ENCODE measurements at regions of chr14 and their contacts with region 1.

Region 1: GRCh38 chr14:103385152-103385993 is at the start of gene MARK3:
- DNase-seq: peak; percentile 97
- H3K4me3 ChIP-seq: peak within 1 kb of the TSS; percentile 94 to 96
- H3K27ac ChIP-seq: peak within 1 kb of the TSS; percentile 98 to 99
- H3K4me1 ChIP-seq: peaks cover 8% of the 10 kb centered on the region
- H3K27me3 ChIP-seq: no peaks in the 10 kb centered on the region
- CTCF ChIP-seq: peak in 2 of 4 experiments; percentile 37 to 38
- POLR2A ChIP-seq: peak; percentile 93
- total RNA-seq, gene MARK3: 51.5 to 115 TPM

Region 2: DNA sequence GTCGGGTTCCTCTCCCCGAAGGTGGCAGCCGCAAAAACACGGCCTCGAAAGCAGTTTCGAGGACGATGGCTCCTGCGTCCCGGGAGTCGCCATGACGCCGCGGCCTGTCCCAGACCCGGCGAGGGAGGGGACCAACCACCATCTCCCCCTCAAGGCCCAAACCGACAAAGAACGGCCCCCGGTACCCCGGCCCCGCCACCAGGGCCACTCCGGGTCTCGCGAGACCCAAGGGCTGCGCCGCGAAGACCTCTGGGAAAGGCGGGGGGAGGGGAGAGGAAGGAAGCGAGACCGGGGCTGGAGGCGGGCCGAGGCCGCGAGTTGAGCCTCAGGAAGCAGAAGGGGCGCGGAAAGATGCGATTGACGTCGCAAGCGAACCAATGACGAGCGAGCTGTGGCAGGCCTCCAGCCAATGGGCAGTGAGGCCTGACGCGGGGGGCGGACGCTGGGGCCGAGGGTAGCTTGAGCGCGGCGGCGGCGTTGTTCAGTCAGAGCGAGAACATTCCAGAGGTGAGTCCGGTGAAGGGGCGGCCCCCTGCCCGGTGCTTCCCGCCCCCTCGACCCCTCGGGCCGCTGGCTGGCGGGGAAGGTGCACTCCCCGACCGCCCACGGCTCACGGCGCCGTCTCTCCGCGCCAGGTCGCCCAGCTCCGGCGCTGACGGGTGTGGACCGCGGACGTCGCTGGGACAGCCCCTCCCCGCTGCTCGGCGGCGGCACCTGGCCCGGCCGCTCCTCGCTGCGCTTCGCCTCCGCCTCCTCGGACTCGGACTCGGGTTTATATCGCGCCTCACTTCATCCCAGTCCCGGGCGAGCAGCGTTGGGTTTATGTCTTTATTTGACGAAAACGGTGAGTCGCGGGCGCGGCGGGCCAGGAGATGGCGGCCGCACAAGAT is 51.4 kb before region 1 on chr14 and contains the start of gene EIF5:
- intact Hi-C with region 1: loop called (anchors 2 kb)
- DNase-seq: peak; percentile 99
- H3K4me3 ChIP-seq: peak within 1 kb of the TSS; percentile 98 to 100
- H3K27ac ChIP-seq: peak within 1 kb of the TSS; percentile 99 to 100
- H3K4me1 ChIP-seq: peaks cover 4% of the 10 kb centered on the region
- H3K27me3 ChIP-seq: no peaks in the 10 kb centered on the region
- CTCF ChIP-seq: peak; percentile 24 to 87 (median 48)
- POLR2A ChIP-seq: peak; percentile 96
- total RNA-seq, gene EIF5: 205 to 268 TPM

Region 3: GRCh38 chr14:103500148-103500990 is 115.0 kb after region 1 on chr14:
- intact Hi-C with region 1: loop called (anchors 5 kb)
- DNase-seq: peak; percentile 96
- H3K4me3 ChIP-seq: no peak overlapping the region
- H3K27ac ChIP-seq: peak overlapping the region; percentile 11 to 61
- H3K4me1 ChIP-seq: no peaks in the 10 kb centered on the region
- H3K27me3 ChIP-seq: no peaks in the 10 kb centered on the region
- CTCF ChIP-seq: peak; percentile 88 to 96 (median 92)
- POLR2A ChIP-seq: no peak

Region 4: DNA sequence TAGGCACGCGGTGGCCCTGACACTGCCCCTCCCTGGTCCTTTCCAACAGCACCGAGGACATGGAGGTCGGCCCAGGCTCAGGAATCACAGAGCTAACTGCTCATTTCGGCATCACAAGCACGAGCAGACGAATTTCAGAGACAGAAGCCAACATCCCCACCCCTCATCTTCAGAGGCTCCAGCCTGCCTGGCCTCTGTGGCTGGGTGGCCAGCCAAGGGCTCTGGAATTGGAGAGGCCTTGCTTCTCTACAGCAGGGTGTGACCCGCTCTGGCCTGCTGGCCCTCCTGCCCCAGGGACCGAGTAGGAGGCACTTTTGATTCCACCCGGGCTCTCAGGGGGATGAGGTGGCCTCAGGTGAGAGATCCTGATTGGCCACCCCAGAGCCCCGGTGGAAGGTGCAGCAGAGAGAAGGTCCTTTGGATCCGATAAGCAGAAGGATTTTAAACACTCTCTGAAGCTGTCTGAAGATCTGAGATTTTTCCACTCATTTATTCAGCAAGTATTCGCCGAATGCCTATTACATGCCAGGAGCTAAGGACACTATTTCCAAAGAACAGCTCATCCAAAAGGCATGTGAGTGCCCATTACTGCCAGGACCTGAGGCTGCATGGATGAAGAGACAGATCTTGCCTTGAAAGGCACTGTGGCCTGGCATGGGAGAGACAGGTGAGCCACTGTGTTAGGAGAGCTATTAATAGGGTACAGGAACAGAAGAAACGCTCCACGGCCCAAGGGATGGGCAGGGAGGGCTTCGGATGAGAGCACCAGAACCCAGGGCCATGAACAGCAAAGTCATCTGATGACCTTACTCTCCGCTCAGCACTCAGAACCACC is 166.9 kb after region 1 on chr14:
- intact Hi-C with region 1: loop called (anchors 5 kb)
- DNase-seq: no peak
- H3K4me3 ChIP-seq: no peak overlapping the region
- H3K27ac ChIP-seq: peak overlapping the region; percentile 68 to 81
- H3K4me1 ChIP-seq: no peaks in the 10 kb centered on the region
- H3K27me3 ChIP-seq: no peaks in the 10 kb centered on the region
- CTCF ChIP-seq: no peak
- POLR2A ChIP-seq: no peak

Measured in prostate gland (tissue), 2 donors.